CD14-positive monocyte (primary cell): ENCODE measurements at regions of chr5 and their contacts with region 1.

Region 1: GRCh38 chr5:33440482-33441240 is at the start of gene TARS1:
- DNase-seq: peak; percentile 98 to 100 (median 99)
- H3K4me3 ChIP-seq: peak within 1 kb of the TSS; percentile 69 to 90 (median 75)
- H3K4me3 Mint-ChIP-seq: no peak within 1 kb of the TSS
- H3K27ac ChIP-seq: peak within 1 kb of the TSS; percentile 79 to 81
- H3K27ac Mint-ChIP-seq: no peak within 1 kb of the TSS
- H3K4me1 ChIP-seq: peaks cover 20 to 34% of the 10 kb centered on the region in 2 donors
- H3K4me1 Mint-ChIP-seq: peaks cover 14% of the 10 kb centered on the region
- H3K27me3 ChIP-seq: no peaks in the 10 kb centered on the region
- H3K27me3 Mint-ChIP-seq: peaks cover 0 to 2% (median 0%) of the 10 kb centered on the region in 3 donors
- CTCF ChIP-seq: no peak
- polyA plus RNA-seq, gene TARS1: 10.6 to 47.8 (median 39.8) TPM

Region 2: GRCh38 chr5:33530183-33531036 is 89.7 kb after region 1 on chr5:
- intact Hi-C with region 1: no loop called
- DNase-seq: no peak
- H3K4me3 ChIP-seq: no peak overlapping the region
- H3K4me3 Mint-ChIP-seq: no peak overlapping the region
- H3K27ac ChIP-seq: no peak overlapping the region
- H3K27ac Mint-ChIP-seq: peak overlapping the region in 1 of 7 donors; percentile 7
- H3K4me1 ChIP-seq: no peaks in the 10 kb centered on the region
- H3K4me1 Mint-ChIP-seq: no peaks in the 10 kb centered on the region
- H3K27me3 ChIP-seq: no peaks in the 10 kb centered on the region
- H3K27me3 Mint-ChIP-seq: peaks cover 0 to 2% (median 2%) of the 10 kb centered on the region in 3 donors
- CTCF ChIP-seq: no peak

Region 3: GRCh38 chr5:33936004-33936380 is 495.3 kb after region 1 on chr5:
- intact Hi-C with region 1: loop called (anchors 5 kb)
- DNase-seq: no peak
- H3K4me3 ChIP-seq: no peak overlapping the region
- H3K4me3 Mint-ChIP-seq: peak overlapping the region in 1 of 2 donors; percentile 71
- H3K27ac ChIP-seq: no peak overlapping the region
- H3K27ac Mint-ChIP-seq: no peak overlapping the region
- H3K4me1 ChIP-seq: no peaks in the 10 kb centered on the region
- H3K4me1 Mint-ChIP-seq: peaks cover 5% of the 10 kb centered on the region
- H3K27me3 ChIP-seq: peaks cover 18 to 55% of the 10 kb centered on the region in 2 donors
- H3K27me3 Mint-ChIP-seq: peaks cover 42 to 59% (median 47%) of the 10 kb centered on the region in 3 donors
- CTCF ChIP-seq: no peak

Region 4: GRCh38 chr5:34459908-34460307 is 1019.2 kb after region 1 on chr5:
- intact Hi-C with region 1: loop called in 1 of 2 experiments (anchors 10 kb)
- DNase-seq: no peak
- H3K4me3 ChIP-seq: no peak overlapping the region
- H3K4me3 Mint-ChIP-seq: no peak overlapping the region
- H3K27ac ChIP-seq: no peak overlapping the region
- H3K27ac Mint-ChIP-seq: no peak overlapping the region
- H3K4me1 ChIP-seq: no peaks in the 10 kb centered on the region
- H3K4me1 Mint-ChIP-seq: no peaks in the 10 kb centered on the region
- H3K27me3 ChIP-seq: no peaks in the 10 kb centered on the region
- H3K27me3 Mint-ChIP-seq: peaks cover 0 to 3% (median 3%) of the 10 kb centered on the region in 3 donors
- CTCF ChIP-seq: no peak

Region 5: DNA sequence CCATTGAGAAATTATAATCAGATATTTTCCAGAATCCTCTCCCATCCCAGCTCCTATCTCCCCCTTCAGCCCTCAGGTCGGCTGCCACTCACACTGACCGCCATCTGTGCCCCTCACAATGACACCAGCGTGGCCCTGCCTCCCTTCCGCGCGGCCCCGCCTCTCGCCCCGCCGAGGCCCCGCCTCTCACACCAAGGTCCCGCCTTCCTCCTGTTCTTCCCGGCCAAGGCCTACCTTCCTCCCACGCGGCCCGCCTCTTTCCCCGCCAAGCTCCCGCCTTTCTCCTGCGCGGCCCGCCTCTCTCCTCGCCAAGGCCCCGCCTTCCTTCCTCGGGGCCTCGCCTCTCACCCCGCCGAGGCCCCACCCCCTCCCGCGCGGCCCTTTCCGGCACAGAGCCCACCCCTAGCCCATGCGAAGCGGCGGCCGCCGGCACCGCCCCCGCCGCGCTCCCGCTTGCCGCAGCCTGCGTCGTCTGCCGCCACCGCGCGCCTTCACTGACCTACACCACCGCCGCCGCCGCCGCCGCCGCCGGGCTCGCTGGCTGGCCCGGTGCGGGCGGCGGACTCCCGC is 1488.6 kb after region 1 on chr5 and contains the start of gene DNAJC21:
- intact Hi-C with region 1: loop called (anchors 10 kb)
- DNase-seq: peak; percentile 93 to 98 (median 94)
- H3K4me3 ChIP-seq: peak within 1 kb of the TSS; percentile 58 to 85 (median 85)
- H3K4me3 Mint-ChIP-seq: peak within 1 kb of the TSS; percentile 96 to 98
- H3K27ac ChIP-seq: peak within 1 kb of the TSS; percentile 85 to 88
- H3K27ac Mint-ChIP-seq: peak within 1 kb of the TSS; percentile 92 to 98 (median 98)
- H3K4me1 ChIP-seq: peaks cover 16 to 21% of the 10 kb centered on the region in 2 donors
- H3K4me1 Mint-ChIP-seq: peaks cover 24% of the 10 kb centered on the region
- H3K27me3 ChIP-seq: no peaks in the 10 kb centered on the region
- H3K27me3 Mint-ChIP-seq: peaks cover 0 to 2% (median 0%) of the 10 kb centered on the region in 3 donors
- CTCF ChIP-seq: no peak
- polyA plus RNA-seq, gene DNAJC21: 8.5 to 10.2 (median 8.6) TPM